Right ventricle myocardium inferior (tissue), 1 donor: ENCODE measurements at regions of chr17 and their contacts with region 1.

Region 1: GRCh38 chr17:68398691-68399637 is 58.3 kb downstream of the WIPI1 start:
- DNase-seq: peak; percentile 79
- ATAC-seq: peak; percentile 84

Region 2: GRCh38 chr17:68172461-68172954 is 226.5 kb before region 1 on chr17:
- intact Hi-C with region 1: loop called (anchors 10 kb)
- DNase-seq: peak; percentile 82
- ATAC-seq: peak; percentile 78

Region 3: DNA sequence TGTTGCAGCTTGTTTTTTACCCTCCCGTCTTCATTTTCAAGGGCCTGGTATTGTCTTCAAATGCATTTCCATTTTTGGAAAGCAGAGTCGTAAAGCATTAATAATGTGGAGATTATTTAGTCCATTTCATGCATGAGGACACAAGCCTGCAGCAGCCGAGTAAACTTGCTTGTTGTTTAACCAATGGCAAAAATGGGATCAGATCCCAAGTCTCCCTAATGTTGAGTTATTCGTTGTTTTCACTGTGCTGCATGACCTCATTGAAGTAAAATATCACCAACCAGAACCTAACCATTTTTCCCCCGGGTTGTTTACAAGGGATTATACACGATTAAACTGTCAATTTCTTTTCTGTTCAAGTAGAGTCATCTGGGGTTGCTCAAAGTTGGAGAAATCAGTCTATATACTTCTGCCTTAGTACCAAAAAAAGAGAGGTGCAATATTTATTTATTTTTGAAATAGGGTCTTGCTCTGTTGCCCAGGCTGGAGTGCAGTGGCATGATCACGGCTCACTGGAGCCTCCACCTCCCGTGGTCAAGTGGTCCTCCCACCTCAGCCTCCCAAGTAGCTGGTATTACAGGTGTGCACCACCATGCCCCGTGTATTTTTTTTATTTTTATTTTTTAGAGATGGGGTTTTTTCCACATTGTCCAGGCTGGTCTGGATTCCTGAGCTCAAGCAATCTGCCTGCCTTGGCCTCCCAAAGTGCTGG is 138.8 kb before region 1 on chr17:
- intact Hi-C with region 1: loop called (anchors 2 kb)
- DNase-seq: no peak
- ATAC-seq: no peak

Region 4: GRCh38 chr17:68273722-68274121 is 125.2 kb before region 1 on chr17:
- intact Hi-C with region 1: no loop called
- DNase-seq: no peak
- ATAC-seq: no peak

Region 5: GRCh38 chr17:68351395-68351794 is 47.6 kb before region 1 on chr17:
- intact Hi-C with region 1: loop called (anchors 5 kb)
- DNase-seq: no peak
- ATAC-seq: peak; percentile 56